ENCODE measurements at regions of chr5 and their contacts with region 1.

Region 1: DNA sequence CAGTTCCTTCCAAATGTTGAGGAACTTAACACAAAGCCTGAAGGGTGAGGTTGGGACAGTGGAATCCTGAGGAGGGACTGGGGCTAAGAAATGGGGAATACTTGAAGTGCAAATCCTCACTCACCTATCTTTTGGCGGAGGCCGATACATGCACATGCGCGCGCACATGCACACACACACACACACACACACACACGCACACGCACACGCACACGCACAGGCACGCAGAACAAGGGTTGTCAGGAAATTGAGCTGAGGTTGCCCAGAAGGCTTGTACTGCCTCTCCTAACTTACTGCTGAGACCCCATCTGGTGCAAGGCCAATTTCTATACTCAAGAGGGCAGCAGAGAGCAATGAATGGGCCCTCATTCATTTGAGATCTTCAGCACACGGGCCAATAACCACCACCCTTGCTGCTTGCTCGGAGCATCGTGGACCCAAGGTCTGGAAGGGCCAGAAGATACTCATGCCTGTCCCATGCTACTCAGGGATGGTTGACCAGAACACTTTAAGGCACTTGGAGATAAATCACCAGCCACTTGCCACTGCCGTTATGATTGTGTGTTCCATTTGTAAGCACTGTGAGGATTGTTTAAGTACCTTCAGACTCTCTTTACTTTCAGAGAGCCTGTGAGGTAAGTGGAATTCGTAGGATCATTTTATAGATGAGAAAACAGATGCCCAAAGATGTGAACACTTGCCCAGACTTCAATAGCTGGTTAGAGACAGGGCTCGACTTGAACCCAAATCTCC is 21.5 kb downstream of the BTF3 start:
- DNase-seq: peak; percentile 86
- H3K4me3 Mint-ChIP-seq: no peak overlapping the region
- H3K27ac Mint-ChIP-seq: no peak overlapping the region
- H3K4me1 Mint-ChIP-seq: peaks cover 16% of the 10 kb centered on the region
- H3K27me3 Mint-ChIP-seq: no peaks in the 10 kb centered on the region
- CTCF ChIP-seq: peak; percentile 68

Region 2: GRCh38 chr5:73498057-73499008 is 21.4 kb before region 1 on chr5 and contains the start of gene BTF3:
- CTCF ChIA-PET with region 1: interaction called, 5 read pairs
- POLR2A ChIA-PET with region 1: interaction called, 17 read pairs
- intact Hi-C with region 1: no loop called
- DNase-seq: peak; percentile 97
- H3K4me3 Mint-ChIP-seq: peak within 1 kb of the TSS; percentile 94
- H3K27ac Mint-ChIP-seq: peak within 1 kb of the TSS; percentile 98
- H3K4me1 Mint-ChIP-seq: peaks cover 15% of the 10 kb centered on the region
- H3K27me3 Mint-ChIP-seq: no peaks in the 10 kb centered on the region
- CTCF ChIP-seq: no peak
- total RNA-seq, gene BTF3: 937 and 946 TPM in 2 replicates

Region 3: GRCh38 chr5:73507062-73507461 is 12.6 kb before region 1 on chr5:
- CTCF ChIA-PET with region 1: interaction called, 18 read pairs
- POLR2A ChIA-PET with region 1: interaction called, 3 read pairs
- intact Hi-C with region 1: no loop called
- DNase-seq: no peak
- H3K4me3 Mint-ChIP-seq: no peak overlapping the region
- H3K27ac Mint-ChIP-seq: no peak overlapping the region
- H3K4me1 Mint-ChIP-seq: no peaks in the 10 kb centered on the region
- H3K27me3 Mint-ChIP-seq: no peaks in the 10 kb centered on the region
- CTCF ChIP-seq: no peak

Region 4: GRCh38 chr5:73540192-73540591 is 20.5 kb after region 1 on chr5:
- CTCF ChIA-PET with region 1: interaction called, 143 read pairs
- POLR2A ChIA-PET with region 1: interaction called, 4 read pairs
- intact Hi-C with region 1: loop called (anchors 1 kb)
- DNase-seq: peak; percentile 68
- H3K4me3 Mint-ChIP-seq: no peak overlapping the region
- H3K27ac Mint-ChIP-seq: peak overlapping the region; percentile 61
- H3K4me1 Mint-ChIP-seq: peaks cover 34% of the 10 kb centered on the region
- H3K27me3 Mint-ChIP-seq: no peaks in the 10 kb centered on the region
- CTCF ChIP-seq: no peak

Region 5: GRCh38 chr5:73565139-73565968 is 45.6 kb after region 1 on chr5 and contains the starts of genes ANKRA2 and UTP15:
- CTCF ChIA-PET with region 1: interaction called, 4 read pairs
- POLR2A ChIA-PET with region 1: interaction called, 3 read pairs
- intact Hi-C with region 1: loop called (anchors 1 kb)
- DNase-seq: peak; percentile 99
- H3K4me3 Mint-ChIP-seq: peak within 1 kb of the TSS; percentile 84
- H3K27ac Mint-ChIP-seq: peak within 1 kb of the TSS; percentile 94
- H3K4me1 Mint-ChIP-seq: peaks cover 11% of the 10 kb centered on the region
- H3K27me3 Mint-ChIP-seq: no peaks in the 10 kb centered on the region
- CTCF ChIP-seq: no peak
- total RNA-seq, gene ANKRA2: 19.3 and 20.2 TPM in 2 replicates
- total RNA-seq, gene UTP15: 41.2 and 41.3 TPM in 2 replicates

Region 6: DNA sequence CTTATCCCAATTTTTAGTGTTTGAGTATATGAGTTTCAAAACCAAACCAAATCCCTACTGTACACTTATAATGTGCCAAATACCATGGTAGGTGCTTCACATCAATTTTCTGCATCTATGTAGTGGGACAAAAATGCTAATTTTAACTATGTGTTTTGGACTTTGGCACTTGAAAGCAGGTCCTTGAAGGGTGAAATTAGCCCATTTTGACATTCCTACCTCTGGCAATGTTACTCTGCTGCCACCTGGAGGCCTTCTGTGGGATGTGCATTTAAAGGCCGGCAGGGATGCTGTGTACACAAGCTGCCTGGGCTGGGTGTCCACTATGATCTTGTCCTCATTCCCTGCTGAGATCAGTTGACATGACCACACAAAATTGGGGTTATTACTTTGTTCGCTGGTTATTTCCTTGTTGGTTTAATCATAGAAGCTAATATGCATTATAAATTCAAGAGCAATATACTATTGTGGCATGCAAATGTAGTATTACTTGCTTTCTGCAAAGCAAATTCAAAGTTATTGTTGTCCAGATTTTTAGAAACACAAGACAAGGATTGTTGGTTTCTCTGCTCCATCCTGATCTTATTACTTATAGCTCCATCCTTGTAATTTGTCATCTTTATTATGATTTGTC is 273.1 kb after region 1 on chr5:
- CTCF ChIA-PET with region 1: interaction called, 4 read pairs
- POLR2A ChIA-PET with region 1: no interaction called
- intact Hi-C with region 1: loop called (anchors 5 kb)
- DNase-seq: peak; percentile 79
- H3K4me3 Mint-ChIP-seq: no peak overlapping the region
- H3K27ac Mint-ChIP-seq: no peak overlapping the region
- H3K4me1 Mint-ChIP-seq: peaks cover 13% of the 10 kb centered on the region
- H3K27me3 Mint-ChIP-seq: no peaks in the 10 kb centered on the region
- CTCF ChIP-seq: peak; percentile 96

Region 7: DNA sequence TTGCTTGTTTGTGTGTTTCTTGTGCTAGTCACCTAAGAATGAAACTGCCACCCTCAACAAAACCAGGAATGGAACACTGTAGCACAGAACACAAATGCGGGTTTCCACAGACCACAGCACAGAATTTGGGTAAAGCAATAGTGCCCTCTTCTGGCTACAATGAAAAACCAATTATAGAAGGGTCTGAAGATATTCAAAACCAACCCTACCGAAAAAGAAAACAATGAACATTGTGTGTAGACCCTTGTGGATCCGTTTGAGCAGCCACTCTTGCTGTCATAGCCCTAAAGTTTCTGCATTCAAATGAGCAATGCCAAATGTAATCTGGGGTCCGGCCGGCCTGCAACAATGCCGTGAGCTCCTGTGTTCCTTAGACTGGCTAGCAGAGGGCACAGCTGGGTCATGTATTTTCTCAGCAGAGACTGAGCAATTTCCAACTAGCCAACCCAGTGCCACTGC is 1129.2 kb after region 1 on chr5:
- CTCF ChIA-PET with region 1: no interaction called
- POLR2A ChIA-PET with region 1: no interaction called
- intact Hi-C with region 1: loop called (anchors 2 kb)
- DNase-seq: peak; percentile 71
- H3K4me3 Mint-ChIP-seq: no peak overlapping the region
- H3K27ac Mint-ChIP-seq: no peak overlapping the region
- H3K4me1 Mint-ChIP-seq: peaks cover 16% of the 10 kb centered on the region
- H3K27me3 Mint-ChIP-seq: no peaks in the 10 kb centered on the region
- CTCF ChIP-seq: peak; percentile 68